Activated T-helper 1 cell treated with anti-CD3 and anti-CD28 coated beads, Interleukin-12 subunit alpha, Interleukin-12 subunit beta, Interleukin-2, Interleukin-4 antibody, amounts not matched to agents 30 ng/mL and 10 ng/mL and 1 ng/mL, durations not matched to agents 14 hours and 24 hours and 36 hours (primary cell): ENCODE measurements at regions of chr12 and their contacts with region 1.

Region 1: DNA sequence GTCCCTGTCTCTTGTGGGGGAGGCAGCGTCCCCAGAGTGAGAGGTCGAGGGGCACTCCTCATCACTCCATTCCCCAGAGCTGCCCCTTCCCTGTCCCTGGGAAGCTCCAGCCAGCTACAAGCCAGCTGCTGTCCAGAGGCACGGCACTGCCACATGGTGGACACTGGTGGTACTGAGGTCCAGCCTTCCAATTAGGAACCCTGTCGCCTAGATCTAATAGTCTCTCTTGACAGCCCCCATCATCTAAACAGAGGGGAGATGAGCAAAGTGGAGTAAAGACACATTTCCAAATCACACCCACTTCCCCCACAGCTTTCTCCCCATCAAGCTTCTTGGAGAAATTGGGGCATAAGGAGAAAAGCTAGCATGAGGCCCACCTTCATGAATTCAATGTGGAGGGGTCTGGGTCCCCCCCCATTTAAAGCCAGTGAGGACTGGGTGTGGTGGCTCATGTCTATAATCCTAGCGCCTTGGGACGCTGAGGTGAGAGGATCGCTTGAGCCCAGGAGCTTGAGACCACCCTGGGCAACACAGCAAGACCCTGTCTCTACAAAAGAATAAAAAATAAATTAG is 2.1 kb upstream of the INHBE start:
- DNase-seq: no peak
- H3K4me3 Mint-ChIP-seq: no peak overlapping the region
- H3K27ac Mint-ChIP-seq: no peak overlapping the region
- H3K4me1 Mint-ChIP-seq: peaks cover 14% of the 10 kb centered on the region
- H3K27me3 Mint-ChIP-seq: no peaks in the 10 kb centered on the region

Region 2: GRCh38 chr12:57263096-57263495 is 189.9 kb before region 1 on chr12:
- intact Hi-C with region 1: loop called (anchors 1 kb)
- DNase-seq: no peak
- H3K4me3 Mint-ChIP-seq: no peak overlapping the region
- H3K27ac Mint-ChIP-seq: no peak overlapping the region
- H3K4me1 Mint-ChIP-seq: peaks cover 7% of the 10 kb centered on the region
- H3K27me3 Mint-ChIP-seq: no peaks in the 10 kb centered on the region

Region 3: GRCh38 chr12:57309420-57309819 is 143.6 kb before region 1 on chr12:
- intact Hi-C with region 1: loop called (anchors 1 kb)
- DNase-seq: no peak
- H3K4me3 Mint-ChIP-seq: no peak overlapping the region
- H3K27ac Mint-ChIP-seq: peak overlapping the region; percentile 9
- H3K4me1 Mint-ChIP-seq: no peaks in the 10 kb centered on the region
- H3K27me3 Mint-ChIP-seq: no peaks in the 10 kb centered on the region

Region 4: GRCh38 chr12:57368349-57369095 is 84.5 kb before region 1 on chr12:
- intact Hi-C with region 1: no loop called
- DNase-seq: no peak
- H3K4me3 Mint-ChIP-seq: no peak overlapping the region
- H3K27ac Mint-ChIP-seq: no peak overlapping the region
- H3K4me1 Mint-ChIP-seq: no peaks in the 10 kb centered on the region
- H3K27me3 Mint-ChIP-seq: no peaks in the 10 kb centered on the region

Region 5: DNA sequence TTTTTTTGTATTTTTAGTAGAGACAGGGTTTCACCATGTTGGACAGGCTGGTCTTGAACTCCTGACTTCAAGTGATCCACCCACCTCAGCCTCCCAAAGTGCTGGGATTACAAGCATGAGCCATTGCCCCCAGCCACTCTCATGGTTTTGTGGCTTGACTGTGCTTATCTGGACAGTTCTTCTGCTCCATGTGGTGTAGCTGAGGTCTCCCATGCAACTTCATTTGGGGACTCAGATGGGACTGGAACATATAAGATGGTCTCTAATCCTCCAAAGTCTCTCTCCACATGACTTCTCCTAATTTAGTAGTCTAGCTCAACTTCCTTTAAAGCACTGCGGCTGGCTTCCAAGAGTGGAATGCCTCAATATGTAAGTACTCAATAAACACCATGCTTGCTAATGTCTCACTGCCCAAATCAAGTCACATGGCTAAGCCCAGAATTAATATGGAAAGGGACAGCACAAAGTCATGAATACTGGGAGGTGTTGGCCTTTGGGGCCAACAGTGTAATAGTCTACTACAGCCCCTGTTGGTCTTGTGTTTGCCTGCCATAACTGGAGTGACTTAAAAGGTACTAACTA is 11.1 kb before region 1 on chr12:
- intact Hi-C with region 1: loop called (anchors 1 kb)
- DNase-seq: no peak
- H3K4me3 Mint-ChIP-seq: no peak overlapping the region
- H3K27ac Mint-ChIP-seq: no peak overlapping the region
- H3K4me1 Mint-ChIP-seq: no peaks in the 10 kb centered on the region
- H3K27me3 Mint-ChIP-seq: peaks cover 13% of the 10 kb centered on the region